Activated CD4-positive, alpha-beta memory T cell treated with anti-CD3 and anti-CD28 coated beads for 36 hours (primary cell): ENCODE measurements at regions of chr3 and their contacts with region 1.

Region 1: GRCh38 chr3:143831208-143831607 is 17.1 kb downstream of the SLC9A9 start:
- DNase-seq: no peak
- H3K4me3 Mint-ChIP-seq: peak overlapping the region; percentile 17
- H3K27ac Mint-ChIP-seq: peak overlapping the region; percentile 20
- H3K4me1 Mint-ChIP-seq: peaks cover 54% of the 10 kb centered on the region
- H3K27me3 Mint-ChIP-seq: no peaks in the 10 kb centered on the region

Region 2: DNA sequence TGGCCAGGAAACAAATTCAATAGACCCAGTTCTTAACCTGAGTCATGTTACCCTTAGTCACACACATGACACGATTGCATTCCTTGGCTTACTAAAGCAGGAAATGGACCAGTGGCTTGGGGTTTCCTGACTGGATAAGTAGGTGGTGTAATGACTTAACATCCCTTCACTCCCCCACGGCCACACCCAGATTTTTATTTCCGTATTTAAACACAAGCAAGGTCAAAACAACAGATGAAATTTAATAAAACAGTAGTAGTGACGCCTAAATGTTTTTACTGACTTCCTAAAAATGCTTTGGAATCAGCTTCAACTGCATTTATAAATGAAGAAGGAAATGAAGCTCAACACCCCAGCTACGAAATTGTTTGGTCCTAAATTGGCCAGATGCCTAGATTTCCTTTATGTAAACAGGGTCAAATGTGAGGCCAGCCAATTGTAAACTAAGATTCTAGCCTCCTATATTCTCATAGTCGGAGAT is 387.3 kb before region 1 on chr3:
- CTCF ChIA-PET with region 1: no interaction called
- POLR2A ChIA-PET with region 1: no interaction called
- intact Hi-C with region 1: loop called (anchors 10 kb)
- DNase-seq: peak; percentile 55
- H3K4me3 Mint-ChIP-seq: no peak overlapping the region
- H3K27ac Mint-ChIP-seq: no peak overlapping the region
- H3K4me1 Mint-ChIP-seq: peaks cover 29% of the 10 kb centered on the region
- H3K27me3 Mint-ChIP-seq: no peaks in the 10 kb centered on the region

Region 3: GRCh38 chr3:143809121-143809621 is 22.0 kb before region 1 on chr3:
- CTCF ChIA-PET with region 1: no interaction called
- POLR2A ChIA-PET with region 1: no interaction called
- intact Hi-C with region 1: loop called (anchors 1 kb)
- DNase-seq: no peak
- H3K4me3 Mint-ChIP-seq: no peak overlapping the region
- H3K27ac Mint-ChIP-seq: no peak overlapping the region
- H3K4me1 Mint-ChIP-seq: peaks cover 12% of the 10 kb centered on the region
- H3K27me3 Mint-ChIP-seq: no peaks in the 10 kb centered on the region

Region 4: GRCh38 chr3:143814443-143814889 is 16.7 kb before region 1 on chr3:
- CTCF ChIA-PET with region 1: no interaction called
- POLR2A ChIA-PET with region 1: no interaction called
- intact Hi-C with region 1: loop called (anchors 1 kb)
- DNase-seq: peak; percentile 36
- H3K4me3 Mint-ChIP-seq: no peak overlapping the region
- H3K27ac Mint-ChIP-seq: peak overlapping the region; percentile 25
- H3K4me1 Mint-ChIP-seq: peaks cover 13% of the 10 kb centered on the region
- H3K27me3 Mint-ChIP-seq: no peaks in the 10 kb centered on the region